ENCODE measurements at regions of chr7 and their contacts with region 1.

Region 1: DNA sequence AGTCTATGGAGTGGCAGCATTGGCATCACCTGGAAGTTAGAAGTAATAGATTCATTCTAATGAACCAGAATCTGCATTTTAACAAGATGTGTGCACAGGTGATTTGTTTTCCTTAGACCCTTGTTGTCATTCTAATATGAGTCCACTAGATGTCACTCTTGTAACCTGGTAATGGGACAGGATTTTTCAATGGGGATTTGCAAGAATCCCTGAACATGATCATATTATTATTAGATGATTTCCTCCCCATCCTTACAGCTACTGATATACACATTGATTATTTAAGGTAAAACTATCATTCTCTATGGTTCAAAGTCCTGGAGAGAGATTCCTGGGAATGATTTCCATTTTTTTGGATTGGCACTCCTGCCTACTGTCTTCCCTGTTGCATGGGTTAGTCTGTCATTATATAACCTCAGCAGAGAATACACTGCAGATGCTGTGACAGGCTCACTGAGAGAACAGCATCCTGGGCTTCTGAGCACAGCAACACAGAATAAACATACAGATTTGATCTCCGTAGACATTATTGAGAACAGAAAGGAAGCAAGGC is 194.9 kb downstream of the SUGCT start:
- DNase-seq: no peak
- H3K4me3 ChIP-seq: no peak overlapping the region
- H3K27ac ChIP-seq: peak overlapping the region in 2 of 4 donors; percentile 42 to 57
- H3K4me1 ChIP-seq: peaks cover 0 to 15% (median 9%) of the 10 kb centered on the region in 4 donors
- H3K27me3 ChIP-seq: no peaks in the 10 kb centered on the region
- CTCF ChIP-seq: peak; percentile 41 to 74 (median 64)
- EP300 ChIP-seq: no peak
- POLR2A ChIP-seq: no peak

Region 2: DNA sequence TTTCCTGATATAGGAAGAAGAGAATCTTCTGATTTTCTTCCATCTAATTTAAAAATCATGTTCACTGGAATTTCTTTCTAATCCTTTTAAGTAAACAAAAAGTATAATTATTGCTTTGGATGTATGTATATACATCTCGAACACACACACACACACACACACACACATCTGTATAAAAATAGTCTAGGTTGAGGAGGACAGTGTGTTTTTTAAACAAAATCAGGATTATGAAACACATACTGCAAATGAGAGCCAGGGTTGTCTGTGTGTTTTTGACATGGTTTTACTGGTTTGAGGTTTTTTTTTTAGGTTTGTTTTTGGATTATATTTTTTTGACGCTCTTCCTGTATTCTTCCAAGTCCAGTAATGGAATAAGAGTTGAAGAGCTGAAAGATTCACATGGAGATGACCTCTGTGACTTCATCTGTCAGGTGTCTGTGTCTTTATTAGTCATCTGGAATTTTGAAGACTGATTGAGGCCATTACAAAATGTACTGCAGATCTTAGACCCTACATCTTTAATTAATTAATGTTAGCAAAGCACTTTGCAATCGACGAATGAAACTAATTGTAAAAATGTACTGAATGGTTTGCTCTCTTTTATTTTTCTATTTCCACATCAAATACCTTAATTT is 42.2 kb after region 1 on chr7:
- intact Hi-C with region 1: no loop called
- DNase-seq: no peak
- H3K4me3 ChIP-seq: no peak overlapping the region
- H3K27ac ChIP-seq: no peak overlapping the region
- H3K4me1 ChIP-seq: no peaks in the 10 kb centered on the region
- H3K27me3 ChIP-seq: no peaks in the 10 kb centered on the region
- CTCF ChIP-seq: no peak
- EP300 ChIP-seq: no peak
- POLR2A ChIP-seq: no peak

Region 3: GRCh38 chr7:40604601-40605438 is 275.1 kb after region 1 on chr7:
- intact Hi-C with region 1: loop called (anchors 5 kb)
- DNase-seq: peak; percentile 60
- H3K4me3 ChIP-seq: no peak overlapping the region
- H3K27ac ChIP-seq: no peak overlapping the region
- H3K4me1 ChIP-seq: peaks cover 0 to 16% (median 6%) of the 10 kb centered on the region in 4 donors
- H3K27me3 ChIP-seq: no peaks in the 10 kb centered on the region
- CTCF ChIP-seq: peak in 2 of 4 experiments; percentile 29 to 45
- EP300 ChIP-seq: no peak
- POLR2A ChIP-seq: no peak

Region 4: DNA sequence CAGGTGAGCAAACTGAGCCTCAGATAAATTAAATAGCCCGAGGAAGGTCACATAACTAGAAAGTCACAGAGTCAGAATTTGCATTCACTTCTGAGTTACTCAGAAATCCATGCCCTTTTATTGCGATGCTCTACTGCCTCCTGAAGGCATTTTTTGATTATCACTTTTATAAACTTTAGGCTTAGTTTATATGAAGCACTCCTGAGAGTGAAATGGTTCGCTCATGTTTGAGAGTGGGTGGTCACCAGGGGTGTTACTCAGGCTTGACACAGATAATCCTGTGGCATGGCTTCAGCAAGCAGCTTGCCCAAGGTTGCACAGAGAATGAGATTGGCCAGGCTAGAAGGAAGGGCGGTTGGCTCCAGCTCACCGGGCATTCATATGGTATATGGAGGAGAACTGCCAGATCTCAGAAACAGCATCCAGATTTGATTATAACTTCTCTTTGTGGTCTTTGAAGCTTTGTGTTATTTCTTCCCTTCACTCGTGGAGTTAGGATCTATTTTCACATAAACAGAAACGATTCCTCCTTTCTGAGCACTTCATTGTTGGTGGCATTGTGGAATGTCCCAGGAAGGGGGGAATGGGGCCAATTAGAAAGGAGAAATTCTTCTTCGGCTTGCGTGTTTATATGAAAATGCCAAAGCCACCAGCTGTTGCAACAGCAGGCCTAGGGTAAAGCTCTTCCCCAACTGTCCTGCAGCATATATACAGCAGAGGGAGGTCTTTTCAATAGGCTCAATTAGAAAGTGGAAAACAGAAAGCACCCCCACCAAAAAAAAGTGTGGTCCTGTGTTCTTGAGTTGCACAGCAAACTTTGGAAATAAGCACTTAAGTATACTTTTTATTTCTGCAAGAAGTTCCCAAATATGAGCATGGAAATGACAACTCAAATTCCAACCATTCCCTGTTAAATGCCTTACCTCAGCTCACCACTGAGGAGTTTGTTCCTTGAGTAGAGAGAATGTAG is 433.9 kb after region 1 on chr7:
- intact Hi-C with region 1: loop called (anchors 2 kb)
- DNase-seq: no peak
- H3K4me3 ChIP-seq: no peak overlapping the region
- H3K27ac ChIP-seq: peak overlapping the region in 2 of 4 donors; percentile 42 to 80
- H3K4me1 ChIP-seq: peaks cover 0 to 26% (median 12%) of the 10 kb centered on the region in 4 donors
- H3K27me3 ChIP-seq: no peaks in the 10 kb centered on the region
- CTCF ChIP-seq: no peak
- EP300 ChIP-seq: no peak
- POLR2A ChIP-seq: no peak

Region 5: GRCh38 chr7:41696314-41696916 is 1366.7 kb after region 1 on chr7:
- intact Hi-C with region 1: loop called (anchors 2 kb)
- DNase-seq: peak; percentile 86
- H3K4me3 ChIP-seq: peak overlapping the region; percentile 17 to 49 (median 34)
- H3K27ac ChIP-seq: peak overlapping the region; percentile 59 to 82 (median 72)
- H3K4me1 ChIP-seq: peaks cover 0 to 54% (median 34%) of the 10 kb centered on the region in 4 donors
- H3K27me3 ChIP-seq: no peaks in the 10 kb centered on the region
- CTCF ChIP-seq: peak; percentile 61 to 85 (median 68)
- EP300 ChIP-seq: no peak
- POLR2A ChIP-seq: no peak

Measured in sigmoid colon (tissue), 7 donors.